Cardiac septum (tissue), 1 donor: ENCODE measurements at regions of chr12 and their contacts with region 1.

Region 1: DNA sequence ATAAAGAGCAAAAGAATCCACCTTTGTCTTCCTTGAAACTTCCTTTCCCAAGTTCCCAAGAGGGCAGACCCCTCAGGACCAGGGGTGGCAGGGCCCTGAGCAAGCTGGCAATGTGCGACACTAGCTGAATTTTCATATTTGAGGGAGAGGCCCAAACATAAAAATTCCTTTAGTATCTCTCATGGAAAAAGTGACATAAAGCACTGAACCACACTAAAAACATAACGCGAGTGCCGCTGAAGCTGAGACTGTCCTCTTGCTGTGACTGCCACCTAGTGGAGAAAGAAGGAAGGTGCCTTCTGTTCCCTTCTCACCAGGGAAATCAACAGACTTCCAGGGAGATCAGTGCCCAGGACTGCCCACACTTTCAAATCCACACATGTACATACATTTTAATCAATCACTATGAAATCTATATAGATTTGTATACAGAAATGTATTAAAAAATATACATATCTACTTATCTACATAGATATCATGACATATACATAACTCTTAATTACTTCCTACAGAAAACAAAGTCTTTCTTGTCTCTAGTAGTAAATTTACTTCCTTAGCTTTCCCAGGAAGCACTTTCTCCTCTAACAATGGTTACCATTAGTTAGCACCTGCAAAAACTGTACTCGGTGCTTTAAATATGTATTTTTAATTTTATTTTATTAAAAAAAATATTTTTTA is 53.8 kb downstream of the SSH1 start:
- DNase-seq: no peak

Region 2: DNA sequence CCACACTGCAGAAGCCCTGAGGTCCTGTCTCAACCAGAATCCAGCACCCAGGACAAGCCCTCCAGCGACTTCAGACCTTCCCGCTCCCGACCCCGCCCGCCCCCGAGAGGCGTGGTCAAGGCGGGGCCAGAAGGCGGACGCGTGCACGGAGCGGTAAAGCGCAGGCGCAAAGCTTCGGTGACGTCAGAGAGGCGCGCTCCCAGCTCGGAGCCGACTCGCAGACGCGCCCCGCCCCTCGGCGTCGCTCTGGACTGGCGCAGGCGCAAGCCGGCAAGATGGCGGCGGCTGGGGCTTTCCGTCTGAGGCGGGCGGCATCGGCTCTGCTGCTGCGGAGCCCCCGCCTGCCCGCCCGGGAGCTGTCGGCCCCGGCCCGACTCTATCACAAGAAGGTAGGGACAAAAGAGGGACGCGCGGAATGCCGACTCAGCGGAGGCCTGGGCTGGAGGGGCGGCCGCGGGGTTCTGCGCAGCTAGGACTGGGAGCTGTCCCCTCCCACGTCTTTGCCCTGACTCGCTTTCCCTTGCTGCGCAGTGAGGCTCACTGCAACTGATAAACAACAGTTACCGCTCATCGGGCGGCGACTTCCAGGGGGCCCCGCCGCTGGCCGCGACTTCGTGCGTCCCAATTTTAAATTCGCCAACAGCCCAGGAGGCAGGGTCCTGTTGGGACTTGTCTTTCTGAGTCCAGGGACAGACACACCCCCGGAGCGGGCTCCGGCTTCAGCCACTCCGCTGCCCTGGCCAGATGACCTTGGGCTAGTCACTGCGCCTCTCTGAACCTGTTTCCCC is 241.0 kb before region 1 on chr12 and contains the start of gene ISCU:
- intact Hi-C with region 1: loop called (anchors 2 kb)
- DNase-seq: peak; percentile 99
- total RNA-seq, gene ISCU: 432 TPM

Region 3: GRCh38 chr12:108664338-108665258 is 139.0 kb before region 1 on chr12:
- intact Hi-C with region 1: loop called (anchors 1 kb)
- DNase-seq: peak; percentile 92

Region 4: DNA sequence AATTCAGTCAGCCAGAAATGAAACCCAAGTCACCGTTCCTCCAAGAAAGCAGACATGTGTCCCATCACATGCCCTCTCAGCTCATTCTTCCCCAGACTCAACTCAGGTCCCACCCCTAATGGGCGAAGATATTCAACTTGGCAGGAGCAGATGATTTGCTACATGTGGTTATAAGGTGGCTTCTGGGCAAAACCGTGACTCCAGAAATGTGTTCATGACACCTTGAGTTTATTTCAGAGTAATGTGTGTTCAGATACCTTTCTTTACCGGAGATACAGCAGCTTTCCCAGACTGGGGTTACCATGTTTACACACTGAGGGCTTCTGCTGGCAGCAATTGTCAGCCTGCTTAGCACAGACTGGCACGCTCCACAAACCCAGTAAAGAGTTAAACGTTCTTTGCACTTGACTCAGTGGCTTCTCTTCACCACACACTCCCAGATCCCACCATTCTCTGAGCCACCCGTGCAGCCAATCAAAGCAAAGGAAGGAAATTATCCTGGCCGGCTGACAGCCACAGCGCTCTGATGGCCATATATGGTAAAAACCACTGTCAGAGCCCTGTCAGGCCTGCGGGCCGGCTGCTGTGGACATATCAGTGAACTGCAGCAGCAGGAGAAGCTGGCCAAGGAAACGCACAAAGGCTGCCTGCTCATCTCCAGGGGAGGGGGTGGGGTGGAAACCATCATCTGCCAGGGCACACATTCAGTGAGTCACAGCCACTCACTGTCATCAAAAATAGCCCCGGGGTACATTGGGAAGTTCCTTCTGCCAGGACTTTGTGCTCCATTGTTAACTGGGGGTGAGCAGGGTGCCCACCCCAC is 112.2 kb before region 1 on chr12:
- intact Hi-C with region 1: loop called (anchors 1 kb)
- DNase-seq: peak; percentile 96

Region 5: GRCh38 chr12:109093022-109093918 is 289.7 kb after region 1 on chr12 and contains the start of gene ALKBH2:
- intact Hi-C with region 1: loop called (anchors 10 kb)
- DNase-seq: peak; percentile 97
- total RNA-seq, gene ALKBH2: 9.7 TPM

Region 6: DNA sequence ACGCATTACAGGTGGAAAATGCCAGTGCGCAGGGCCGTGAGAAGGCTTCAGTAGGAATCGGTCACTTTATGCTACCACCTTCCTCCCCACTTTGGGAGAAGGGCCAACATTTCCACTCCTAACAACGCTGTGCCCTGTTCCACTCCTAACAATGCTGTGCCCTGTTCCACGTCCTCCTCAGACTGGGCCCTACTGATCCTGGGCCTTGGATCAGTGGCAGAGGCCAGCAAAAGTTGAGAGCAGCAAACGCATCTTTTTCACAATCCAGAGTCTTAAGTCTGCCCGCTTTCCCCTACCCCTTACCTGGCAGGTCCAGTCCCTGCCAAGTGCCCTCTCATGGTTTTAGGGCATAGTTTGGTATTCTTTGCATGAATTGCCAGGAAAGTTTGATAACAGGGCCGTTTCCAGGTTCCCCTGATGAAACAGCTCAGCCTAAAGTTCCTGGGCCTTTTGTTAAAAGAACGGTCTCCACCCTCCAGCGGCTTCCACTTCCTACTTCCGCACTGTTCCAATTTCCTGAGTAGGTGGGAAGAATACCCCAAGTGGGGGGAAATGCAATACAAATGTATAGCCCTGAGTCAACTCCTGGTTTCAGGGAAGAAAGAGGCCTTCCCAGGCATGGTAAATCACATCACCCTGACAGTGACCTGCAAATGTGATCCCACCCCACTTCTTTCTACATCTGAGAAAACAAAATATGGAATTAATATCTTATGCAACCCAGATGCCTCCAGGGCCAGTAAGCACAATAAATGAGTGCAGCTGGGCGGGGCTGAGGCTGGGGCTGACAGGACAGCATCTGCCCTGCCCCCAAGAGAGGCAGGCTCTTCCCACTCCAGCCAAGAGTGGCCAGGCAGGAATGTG is 658.5 kb after region 1 on chr12:
- intact Hi-C with region 1: no loop called
- DNase-seq: peak; percentile 93